Lower leg skin (tissue), 4 donors: ENCODE measurements at regions of chr17 and their contacts with region 1.

Region 1: DNA sequence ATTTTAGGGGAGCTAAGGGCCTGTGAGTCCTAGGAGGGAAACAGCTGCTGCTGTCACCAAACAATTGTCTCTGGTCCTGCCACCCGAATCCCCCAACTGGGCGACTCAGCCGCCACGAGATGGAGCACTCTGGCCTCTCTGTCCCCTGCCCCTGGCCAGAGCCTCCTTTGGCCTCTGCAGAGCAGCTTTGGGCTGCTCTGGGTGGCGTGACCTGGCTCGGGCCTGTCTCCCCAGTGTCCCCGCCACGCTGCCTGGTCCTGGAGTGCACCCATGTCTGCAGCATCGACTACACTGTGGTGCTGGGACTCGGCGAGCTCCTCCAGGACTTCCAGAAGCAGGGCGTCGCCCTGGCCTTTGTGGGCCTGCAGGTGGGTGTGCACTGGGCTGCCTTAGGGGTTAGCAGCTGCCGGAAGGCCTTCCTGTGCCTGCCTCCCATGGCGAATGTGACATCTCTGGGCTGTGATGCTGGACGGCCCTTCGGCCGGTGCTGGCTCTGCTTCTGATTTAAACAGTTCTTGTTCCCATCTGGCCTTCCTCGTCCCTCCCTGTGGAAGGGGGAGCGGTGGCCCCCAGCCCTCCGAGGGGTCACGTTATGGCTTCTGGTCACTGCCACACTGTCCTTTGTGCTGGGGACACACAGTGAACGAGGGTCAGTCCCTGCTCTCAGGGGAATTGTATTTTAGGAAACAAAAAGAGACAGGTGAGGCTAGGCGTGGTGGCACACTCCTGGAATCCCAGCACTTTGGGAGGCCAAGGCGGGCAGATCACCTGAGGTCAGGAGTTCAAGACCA is 11.5 kb upstream of the RNF213 start:
- DNase-seq: no peak
- H3K4me3 ChIP-seq: no peak overlapping the region
- CTCF ChIP-seq: no peak
- POLR2A ChIP-seq: no peak

Region 2: DNA sequence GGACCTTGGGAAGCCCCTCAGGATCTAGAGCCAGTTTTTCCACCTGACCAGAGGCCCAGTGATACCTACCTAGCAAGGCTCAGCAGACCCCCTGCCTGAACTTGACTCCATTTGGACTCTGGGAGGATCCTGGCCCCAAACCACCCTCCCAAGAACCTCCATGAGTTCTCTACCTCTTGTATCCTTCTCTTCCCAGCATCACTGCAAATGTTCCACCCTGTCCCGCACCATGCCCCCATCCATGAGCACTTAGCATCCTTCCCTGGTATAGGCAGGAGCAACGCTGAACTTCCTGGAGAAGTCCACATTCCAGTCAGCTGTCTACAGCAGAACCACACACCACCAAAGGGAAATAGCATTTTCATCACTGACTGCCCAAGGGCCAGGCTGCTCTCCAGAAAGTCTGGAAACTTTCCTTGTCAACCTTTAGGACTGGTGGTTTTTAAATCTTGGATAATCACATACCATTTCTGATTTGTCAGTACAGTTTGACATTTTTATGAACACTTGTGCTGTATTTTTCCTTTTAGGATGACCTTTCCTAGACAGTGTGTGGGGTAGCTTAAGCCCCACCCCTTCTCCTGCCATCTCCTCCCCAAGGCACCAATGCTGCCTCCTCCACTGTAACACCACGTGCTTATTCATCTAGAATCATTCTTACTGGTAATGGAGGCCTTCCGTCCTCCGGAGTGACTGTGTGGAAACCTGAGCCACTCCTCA is 116.0 kb before region 1 on chr17:
- intact Hi-C with region 1: loop called (anchors 10 kb)
- DNase-seq: peak in 1 of 2 donors; percentile 58
- H3K4me3 ChIP-seq: no peak overlapping the region
- CTCF ChIP-seq: no peak
- POLR2A ChIP-seq: no peak

Region 3: GRCh38 chr17:80292521-80292971 is 43.4 kb after region 1 on chr17:
- intact Hi-C with region 1: no loop called
- DNase-seq: no peak
- H3K4me3 ChIP-seq: no peak overlapping the region
- CTCF ChIP-seq: no peak
- POLR2A ChIP-seq: no peak